Cardiac septum (tissue), 1 donor: ENCODE measurements at regions of chr7 and their contacts with region 1.

Region 1: GRCh38 chr7:124784879-124785818 is 19.6 kb upstream of the GPR37 start:
- DNase-seq: no peak

Region 2: GRCh38 chr7:124162667-124163066 is 622.5 kb before region 1 on chr7:
- intact Hi-C with region 1: loop called (anchors 5 kb)
- DNase-seq: no peak

Region 3: DNA sequence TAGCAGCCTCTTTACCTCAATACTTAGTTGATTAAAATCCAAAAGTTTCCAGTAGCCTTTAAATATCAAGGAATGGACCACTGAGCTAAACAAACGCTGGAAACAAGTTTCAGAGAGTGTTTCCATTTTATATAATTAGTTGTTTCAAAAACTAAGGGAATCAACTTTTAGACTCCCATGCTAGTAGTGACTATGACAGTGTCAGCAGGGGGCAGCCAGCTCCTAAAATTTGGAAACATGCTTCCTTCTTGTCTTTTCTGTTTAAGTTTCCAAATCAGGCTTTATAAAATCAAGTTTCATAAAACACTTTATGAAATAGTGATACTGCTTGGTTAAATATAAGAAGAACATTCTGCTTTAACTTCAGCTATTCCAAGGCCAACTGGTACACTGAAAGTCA is 614.1 kb before region 1 on chr7:
- intact Hi-C with region 1: loop called (anchors 2 kb)
- DNase-seq: no peak

Region 4: GRCh38 chr7:124765401-124766352 is 19.5 kb before region 1 on chr7 and contains the start of gene GPR37:
- intact Hi-C with region 1: no loop called
- DNase-seq: no peak
- total RNA-seq, gene GPR37: 0.13 TPM